ENCODE measurements at regions of chr1 and their contacts with region 1.

Region 1: GRCh38 chr1:70509996-70510876 is 99.2 kb downstream of the CTH start:
- DNase-seq: peak in 3 of 14 experiments; percentile 49 to 70 (median 68)
- ATAC-seq: peak; percentile 68
- H3K4me3 ChIP-seq: no peak overlapping the region
- H3K4me3 Mint-ChIP-seq: no peak overlapping the region
- H3K27ac ChIP-seq: no peak overlapping the region
- H3K27ac Mint-ChIP-seq: no peak overlapping the region
- H3K4me1 ChIP-seq: no peaks in the 10 kb centered on the region
- H3K4me1 Mint-ChIP-seq: no peaks in the 10 kb centered on the region
- H3K27me3 ChIP-seq: no peaks in the 10 kb centered on the region
- H3K27me3 Mint-ChIP-seq: peaks cover 18% of the 10 kb centered on the region
- CTCF ChIP-seq: peak; percentile 82

Region 2: DNA sequence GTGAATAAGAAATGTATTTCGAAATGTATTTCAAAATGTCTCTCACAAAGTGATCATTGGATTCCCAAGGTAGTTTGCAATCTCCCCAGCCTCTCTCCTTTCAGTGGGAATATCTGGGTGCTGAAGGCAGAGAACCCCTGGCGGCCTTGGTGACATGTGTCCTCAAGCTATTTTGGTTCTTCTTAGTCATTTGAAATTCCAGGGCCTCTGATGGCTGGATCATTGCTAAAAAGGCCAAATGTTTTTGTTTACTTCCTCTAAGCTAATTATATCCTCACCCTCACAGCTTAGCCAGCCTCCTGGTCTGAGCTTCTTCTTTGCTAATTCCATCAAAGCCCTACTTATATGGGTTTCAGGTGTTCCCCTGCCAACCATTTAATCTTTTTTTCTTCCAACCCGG is 376.1 kb before region 1 on chr1:
- CTCF ChIA-PET with region 1: interaction called, 3 read pairs
- POLR2A ChIA-PET with region 1: no interaction called
- intact Hi-C with region 1: loop called (anchors 1 kb)
- DNase-seq: no peak
- ATAC-seq: no peak
- H3K4me3 ChIP-seq: no peak overlapping the region
- H3K4me3 Mint-ChIP-seq: no peak overlapping the region
- H3K27ac ChIP-seq: no peak overlapping the region
- H3K27ac Mint-ChIP-seq: no peak overlapping the region
- H3K4me1 ChIP-seq: no peaks in the 10 kb centered on the region
- H3K4me1 Mint-ChIP-seq: no peaks in the 10 kb centered on the region
- H3K27me3 ChIP-seq: no peaks in the 10 kb centered on the region
- H3K27me3 Mint-ChIP-seq: peaks cover 5% of the 10 kb centered on the region
- CTCF ChIP-seq: no peak

Region 3: DNA sequence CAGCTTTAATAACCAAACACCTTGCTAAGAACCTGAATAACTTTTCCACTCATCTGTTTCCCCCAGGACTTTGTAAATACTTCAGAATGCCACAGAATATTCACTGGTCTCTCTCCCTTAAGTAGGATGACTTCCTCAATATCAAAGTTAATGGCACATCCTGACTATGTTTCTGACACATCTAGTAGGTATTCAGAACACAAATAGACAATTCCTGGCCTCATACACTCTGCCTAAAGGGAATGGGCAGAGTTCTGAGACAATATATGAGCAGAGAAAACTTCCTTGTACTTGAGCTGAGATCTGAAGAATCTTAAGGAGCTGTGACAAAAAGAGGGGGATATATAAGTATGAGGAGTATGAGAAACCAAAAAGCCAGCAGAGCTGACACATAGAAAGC is 190.5 kb before region 1 on chr1:
- CTCF ChIA-PET with region 1: no interaction called
- POLR2A ChIA-PET with region 1: no interaction called
- intact Hi-C with region 1: loop called (anchors 10 kb)
- DNase-seq: no peak
- ATAC-seq: no peak
- H3K4me3 ChIP-seq: no peak overlapping the region
- H3K4me3 Mint-ChIP-seq: no peak overlapping the region
- H3K27ac ChIP-seq: no peak overlapping the region
- H3K27ac Mint-ChIP-seq: no peak overlapping the region
- H3K4me1 ChIP-seq: no peaks in the 10 kb centered on the region
- H3K4me1 Mint-ChIP-seq: peaks cover 23% of the 10 kb centered on the region
- H3K27me3 ChIP-seq: no peaks in the 10 kb centered on the region
- H3K27me3 Mint-ChIP-seq: no peaks in the 10 kb centered on the region
- CTCF ChIP-seq: no peak